Activated T-helper 2 cell treated with anti-CD3 and anti-CD28 coated beads, Interferon-gamma antibody, Interleukin-2, Interleukin-4, amounts not matched to agents 10 μg/mL and 5 μg/mL and 100 μg/mL, durations not matched to agents 14 hours and 24 hours and 36 hours (primary cell): ENCODE measurements at regions of chr11 and their contacts with region 1.

Region 1: DNA sequence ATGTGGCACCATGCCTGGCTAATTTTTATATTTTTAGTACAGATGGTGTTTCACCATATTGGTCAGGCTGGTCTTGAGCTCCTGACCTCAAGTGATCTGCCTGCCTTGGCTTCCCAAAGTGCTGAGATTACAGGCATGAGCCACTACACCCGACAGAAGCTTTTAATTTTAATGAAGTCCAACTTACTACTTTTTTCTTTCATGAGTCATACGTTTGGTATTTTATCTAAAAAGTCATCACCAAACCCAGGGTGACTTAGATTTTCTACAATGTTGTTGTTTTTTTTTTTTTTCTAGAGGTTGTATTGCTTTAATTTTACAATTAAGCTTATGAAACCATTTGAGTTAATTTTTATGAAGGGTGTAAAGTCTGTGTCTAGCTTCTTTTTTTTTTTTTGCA is 34.9 kb downstream of the JRKL start:
- DNase-seq: no peak
- H3K4me3 Mint-ChIP-seq: no peak overlapping the region
- H3K27ac Mint-ChIP-seq: no peak overlapping the region
- H3K4me1 Mint-ChIP-seq: peaks cover 17% of the 10 kb centered on the region
- H3K27me3 Mint-ChIP-seq: peaks cover 33% of the 10 kb centered on the region

Region 2: GRCh38 chr11:95835768-95836488 is 588.8 kb before region 1 on chr11:
- intact Hi-C with region 1: loop called (anchors 2 kb)
- DNase-seq: peak; percentile 27
- H3K4me3 Mint-ChIP-seq: no peak overlapping the region
- H3K27ac Mint-ChIP-seq: no peak overlapping the region
- H3K4me1 Mint-ChIP-seq: no peaks in the 10 kb centered on the region
- H3K27me3 Mint-ChIP-seq: no peaks in the 10 kb centered on the region

Region 3: DNA sequence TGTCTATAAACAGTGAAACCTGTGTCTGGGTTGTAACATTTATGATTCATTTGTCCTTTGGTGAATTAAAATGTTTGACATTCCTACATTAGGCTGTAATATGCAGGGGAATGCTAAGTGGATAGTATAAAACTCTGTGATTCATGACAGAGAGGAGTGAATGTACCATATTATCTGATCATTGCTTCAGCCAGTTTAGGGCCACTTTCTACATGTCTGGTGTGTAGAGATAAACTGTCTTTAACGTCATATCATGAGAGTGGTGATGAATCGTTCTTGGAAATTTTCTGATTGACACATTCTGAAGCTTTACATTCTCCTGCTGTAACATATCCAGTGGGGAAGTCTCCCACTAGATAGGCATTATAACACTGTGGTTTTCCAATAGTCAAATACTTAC is 392.8 kb after region 1 on chr11:
- intact Hi-C with region 1: no loop called
- DNase-seq: no peak
- H3K4me3 Mint-ChIP-seq: no peak overlapping the region
- H3K27ac Mint-ChIP-seq: no peak overlapping the region
- H3K4me1 Mint-ChIP-seq: no peaks in the 10 kb centered on the region
- H3K27me3 Mint-ChIP-seq: no peaks in the 10 kb centered on the region